GM12878 (cell line): ENCODE measurements at regions of chr1 and their contacts with region 1.

Region 1: DNA sequence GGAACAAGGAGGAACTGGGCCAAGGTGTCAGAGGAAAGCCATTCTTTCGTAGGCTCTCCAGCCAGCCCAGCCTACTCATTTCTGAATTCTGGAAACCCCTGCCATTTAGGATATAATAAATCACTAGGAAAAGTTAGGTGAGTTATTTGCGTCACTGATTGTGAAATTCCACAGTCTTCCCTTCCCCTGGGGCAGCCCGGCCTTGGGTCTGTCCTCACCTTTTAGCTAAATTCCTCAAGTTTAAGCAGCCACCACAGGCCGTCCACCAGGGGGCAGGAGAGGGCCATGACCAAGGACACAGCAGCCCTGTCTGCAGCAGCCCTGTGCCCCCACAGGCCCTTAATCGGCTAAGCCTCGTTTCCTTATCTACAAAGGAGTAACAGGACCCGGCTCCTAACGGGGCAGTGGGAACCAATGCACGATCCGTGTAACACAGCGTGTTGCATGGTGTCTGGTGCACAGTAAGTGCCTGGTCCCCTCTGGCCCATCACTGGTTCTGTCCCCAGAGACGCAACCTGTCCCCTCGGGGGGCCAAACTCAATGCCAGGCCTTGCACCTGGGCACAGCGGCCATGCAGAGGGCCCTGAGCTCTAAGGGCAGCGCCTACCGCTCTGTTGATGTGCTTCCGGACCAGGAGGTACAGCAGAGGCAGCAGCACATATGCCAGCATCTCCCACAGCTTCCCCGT is 18.1 kb downstream of the GPR157 start:
- DNase-seq: no peak
- ATAC-seq: peak; percentile 94
- H3K4me3 ChIP-seq: no peak overlapping the region
- H3K27ac ChIP-seq: no peak overlapping the region
- H3K4me1 ChIP-seq: peaks cover 19% of the 10 kb centered on the region
- H3K27me3 ChIP-seq: no peaks in the 10 kb centered on the region
- CTCF ChIP-seq: peak; percentile 87 to 93 (median 91)
- EP300 ChIP-seq: no peak
- POLR2A ChIP-seq: no peak
- RAD21 ChIP-seq: peak; percentile 98

Region 2: GRCh38 chr1:9087411-9088125 is 23.2 kb before region 1 on chr1:
- CTCF ChIA-PET with region 1: no interaction called
- POLR2A ChIA-PET with region 1: no interaction called
- RAD21 ChIA-PET with region 1: no interaction called
- SMC1A ChIA-PET with region 1: no interaction called
- in situ Hi-C with region 1: no loop called
- intact Hi-C with region 1: no loop called
- DNase-seq: no peak
- ATAC-seq: no peak
- H3K4me3 ChIP-seq: no peak overlapping the region
- H3K27ac ChIP-seq: no peak overlapping the region
- H3K4me1 ChIP-seq: no peaks in the 10 kb centered on the region
- H3K27me3 ChIP-seq: no peaks in the 10 kb centered on the region; a peak in 2 of 4 replicates
- CTCF ChIP-seq: no peak
- EP300 ChIP-seq: no peak
- POLR2A ChIP-seq: no peak
- RAD21 ChIP-seq: no peak

Region 3: DNA sequence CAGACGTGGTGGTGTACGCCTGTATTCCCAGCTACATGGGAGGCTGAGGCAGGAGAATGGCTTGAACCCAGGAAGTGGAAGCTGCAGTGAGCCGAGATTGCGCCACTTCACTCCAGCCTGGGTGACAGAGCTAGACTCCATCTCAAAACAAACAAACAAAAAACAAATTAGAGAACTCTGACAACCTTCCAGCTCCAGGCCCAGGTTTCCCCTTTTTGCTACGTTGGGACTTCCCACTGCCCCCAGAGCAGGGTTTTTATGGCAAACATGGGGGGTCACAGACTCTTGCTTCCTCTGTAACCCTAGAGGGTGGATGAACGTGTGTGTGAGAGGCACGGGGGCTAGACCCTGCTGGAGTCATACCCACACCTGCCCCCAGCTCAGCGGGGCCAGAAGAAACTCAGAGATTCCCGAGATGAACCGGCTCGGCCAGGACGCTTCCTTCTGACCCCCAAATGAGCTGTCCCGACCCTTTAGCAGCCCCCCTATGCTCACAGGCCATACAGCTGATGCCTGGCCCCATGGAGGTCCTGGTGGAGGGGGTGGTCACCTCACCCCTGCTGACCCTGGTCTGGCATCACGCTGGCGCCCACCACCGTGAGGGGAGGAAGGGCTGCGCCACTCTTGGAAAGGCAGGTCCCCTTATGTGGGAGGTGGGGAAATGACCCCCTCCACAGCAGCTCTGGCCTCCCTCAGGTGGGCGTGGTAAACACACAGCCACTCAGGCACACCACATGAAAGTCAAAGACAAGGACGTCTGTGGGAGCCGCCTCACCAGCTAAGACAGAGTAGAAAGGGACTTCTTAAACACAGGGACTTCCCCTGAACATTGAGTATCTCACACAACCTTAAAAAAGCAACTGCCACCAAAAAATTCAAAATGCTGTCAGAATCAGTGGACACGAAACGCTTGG is 10.9 kb after region 1 on chr1:
- CTCF ChIA-PET with region 1: interaction called, 36 read pairs
- POLR2A ChIA-PET with region 1: no interaction called
- RAD21 ChIA-PET with region 1: interaction called, 8 read pairs
- SMC1A ChIA-PET with region 1: interaction called, 20 read pairs
- in situ Hi-C with region 1: no loop called
- intact Hi-C with region 1: no loop called
- DNase-seq: peak; percentile 71
- ATAC-seq: peak; percentile 89
- H3K4me3 ChIP-seq: peak overlapping the region; percentile 53; the same call in 1 of the 2 replicates
- H3K27ac ChIP-seq: peak overlapping the region; percentile 74
- H3K4me1 ChIP-seq: peaks cover 40% of the 10 kb centered on the region
- H3K27me3 ChIP-seq: no peaks in the 10 kb centered on the region
- CTCF ChIP-seq: no peak
- EP300 ChIP-seq: peak; percentile 33 to 41; a peak in 1 of 4 replicates
- POLR2A ChIP-seq: no peak
- RAD21 ChIP-seq: no peak

Region 4: GRCh38 chr1:9145021-9145668 is 34.3 kb after region 1 on chr1:
- CTCF ChIA-PET with region 1: interaction called, 46 read pairs
- POLR2A ChIA-PET with region 1: no interaction called
- RAD21 ChIA-PET with region 1: interaction called, 12 read pairs
- SMC1A ChIA-PET with region 1: interaction called, 7 read pairs
- in situ Hi-C with region 1: no loop called
- intact Hi-C with region 1: no loop called
- DNase-seq: no peak
- ATAC-seq: peak; percentile 62
- H3K4me3 ChIP-seq: no peak overlapping the region
- H3K27ac ChIP-seq: no peak overlapping the region; the same call in 1 of the 2 replicates
- H3K4me1 ChIP-seq: peaks cover 17% of the 10 kb centered on the region
- H3K27me3 ChIP-seq: no peaks in the 10 kb centered on the region
- CTCF ChIP-seq: no peak
- EP300 ChIP-seq: no peak
- POLR2A ChIP-seq: no peak
- RAD21 ChIP-seq: no peak

Region 5: DNA sequence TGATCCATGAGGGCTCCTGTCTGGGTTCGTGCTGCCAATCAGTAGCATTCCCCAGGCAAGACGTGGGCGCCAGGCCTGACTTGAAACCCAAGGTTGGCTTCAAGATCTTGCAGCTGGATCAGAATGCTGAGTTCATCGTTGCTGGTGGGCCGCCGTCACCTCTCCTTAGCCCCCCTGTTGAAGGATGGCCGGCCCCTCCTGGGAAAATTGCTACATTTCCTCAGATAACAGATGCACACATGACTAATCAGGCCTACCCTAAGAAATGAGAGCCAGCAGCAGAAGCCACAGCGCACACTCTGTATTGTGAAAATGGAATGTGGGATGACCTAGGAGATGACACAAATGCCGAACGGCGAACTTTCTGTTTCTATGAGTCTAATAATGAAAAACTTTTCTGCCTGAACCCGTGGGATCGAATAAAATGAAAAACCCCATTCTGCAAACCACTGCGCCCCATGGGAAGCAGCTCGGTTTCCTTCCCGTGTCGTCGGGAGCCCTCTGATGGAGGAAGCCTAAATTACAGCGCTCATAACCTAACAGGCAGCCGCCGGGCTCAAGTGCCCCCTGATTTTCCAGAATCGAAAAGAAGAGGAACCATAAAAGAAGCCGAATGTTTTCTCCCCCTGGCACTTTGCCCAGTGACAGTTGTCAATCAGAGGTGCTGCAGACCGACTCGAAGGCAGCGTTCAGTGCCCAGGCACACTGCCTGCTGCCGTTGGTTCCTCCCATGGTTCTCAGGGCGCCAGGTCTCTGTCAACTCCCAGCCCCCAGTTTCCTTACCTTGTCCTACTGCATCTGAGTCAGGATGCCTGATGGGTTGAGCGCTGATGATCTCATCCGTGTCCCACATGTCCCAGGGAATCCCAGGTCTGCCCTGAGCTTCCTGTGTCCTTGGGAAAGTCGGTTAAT is 85.6 kb after region 1 on chr1:
- CTCF ChIA-PET with region 1: interaction called, 117 read pairs
- POLR2A ChIA-PET with region 1: interaction called, 6 read pairs
- RAD21 ChIA-PET with region 1: interaction called, 59 read pairs
- SMC1A ChIA-PET with region 1: interaction called, 43 read pairs
- in situ Hi-C with region 1: loop called (anchors 5 kb)
- intact Hi-C with region 1: loop called (anchors 1 kb)
- DNase-seq: peak; percentile 67
- ATAC-seq: peak; percentile 74
- H3K4me3 ChIP-seq: peak overlapping the region; percentile 5; the same call in 1 of the 2 replicates
- H3K27ac ChIP-seq: peak overlapping the region; percentile 51
- H3K4me1 ChIP-seq: peaks cover 52% of the 10 kb centered on the region
- H3K27me3 ChIP-seq: peaks cover 0 to 21% of the 10 kb centered on the region in 2 experiments; a peak in 3 of 4 replicates
- CTCF ChIP-seq: peak; percentile 81 to 97 (median 86); a peak in 5 of 6 replicates
- EP300 ChIP-seq: peak in 1 of 2 experiments; percentile 61; a peak in 1 of 4 replicates
- POLR2A ChIP-seq: no peak
- RAD21 ChIP-seq: peak; percentile 96

Region 6: DNA sequence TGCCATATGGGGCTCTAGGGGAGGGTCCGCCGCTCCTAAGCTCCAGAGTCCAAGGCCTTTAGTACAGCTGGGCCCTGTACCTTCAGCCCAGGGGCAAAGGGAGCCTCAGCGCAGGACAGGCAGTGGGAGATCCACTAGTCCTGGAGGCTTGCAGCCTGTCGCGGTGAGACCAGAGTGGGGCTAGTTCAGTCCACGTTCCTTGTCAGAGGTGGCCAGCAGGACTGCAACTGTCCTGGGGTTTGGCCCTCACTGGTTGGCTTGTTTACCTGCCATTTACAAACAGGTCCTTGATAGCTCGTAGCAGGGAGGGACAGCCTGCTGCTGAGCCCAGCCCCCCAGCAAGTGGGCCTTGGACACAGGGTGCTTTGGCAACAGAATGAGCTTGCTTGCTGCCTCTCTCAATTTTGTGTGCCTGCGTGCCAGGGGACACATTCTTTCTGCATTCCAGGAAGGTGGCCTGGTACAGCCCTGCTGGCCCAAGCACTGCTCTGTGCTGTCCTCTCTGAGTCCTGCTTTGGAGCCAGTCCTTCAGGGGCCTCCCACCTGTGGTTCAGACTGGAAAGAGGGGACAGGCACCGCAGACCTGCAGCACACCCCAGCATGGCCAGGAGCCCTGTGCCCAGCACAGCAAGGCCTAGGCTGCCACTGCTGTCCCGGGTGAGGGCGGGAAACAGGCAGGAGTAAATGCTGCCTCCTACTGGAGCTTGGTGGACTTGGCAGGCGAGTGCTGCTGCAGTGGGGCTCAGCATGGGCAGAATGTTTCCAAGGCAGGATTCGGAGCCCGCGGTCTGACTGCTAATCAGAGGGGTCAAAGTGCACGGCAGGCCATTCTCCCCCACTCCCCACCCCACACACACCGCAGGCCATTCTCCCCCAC is 139.0 kb after region 1 on chr1:
- CTCF ChIA-PET with region 1: interaction called, 12 read pairs
- POLR2A ChIA-PET with region 1: interaction called, 3 read pairs
- RAD21 ChIA-PET with region 1: interaction called, 3 read pairs
- SMC1A ChIA-PET with region 1: interaction called, 4 read pairs
- in situ Hi-C with region 1: no loop called
- intact Hi-C with region 1: loop called (anchors 5 kb)
- DNase-seq: no peak
- ATAC-seq: peak; percentile 93
- H3K4me3 ChIP-seq: no peak overlapping the region
- H3K27ac ChIP-seq: no peak overlapping the region
- H3K4me1 ChIP-seq: no peaks in the 10 kb centered on the region
- H3K27me3 ChIP-seq: no peaks in the 10 kb centered on the region
- CTCF ChIP-seq: peak; percentile 49 to 60 (median 57)
- EP300 ChIP-seq: no peak
- POLR2A ChIP-seq: no peak
- RAD21 ChIP-seq: peak; percentile 65

Region 7: GRCh38 chr1:9338397-9339246 is 227.8 kb after region 1 on chr1:
- CTCF ChIA-PET with region 1: no interaction called
- POLR2A ChIA-PET with region 1: no interaction called
- RAD21 ChIA-PET with region 1: no interaction called
- SMC1A ChIA-PET with region 1: no interaction called
- in situ Hi-C with region 1: no loop called
- intact Hi-C with region 1: no loop called
- DNase-seq: no peak
- ATAC-seq: no peak
- H3K4me3 ChIP-seq: no peak overlapping the region
- H3K27ac ChIP-seq: no peak overlapping the region
- H3K4me1 ChIP-seq: no peaks in the 10 kb centered on the region
- H3K27me3 ChIP-seq: no peaks in the 10 kb centered on the region; a peak in 1 of 4 replicates
- CTCF ChIP-seq: no peak
- EP300 ChIP-seq: no peak
- POLR2A ChIP-seq: no peak
- RAD21 ChIP-seq: no peak

Region 8: DNA sequence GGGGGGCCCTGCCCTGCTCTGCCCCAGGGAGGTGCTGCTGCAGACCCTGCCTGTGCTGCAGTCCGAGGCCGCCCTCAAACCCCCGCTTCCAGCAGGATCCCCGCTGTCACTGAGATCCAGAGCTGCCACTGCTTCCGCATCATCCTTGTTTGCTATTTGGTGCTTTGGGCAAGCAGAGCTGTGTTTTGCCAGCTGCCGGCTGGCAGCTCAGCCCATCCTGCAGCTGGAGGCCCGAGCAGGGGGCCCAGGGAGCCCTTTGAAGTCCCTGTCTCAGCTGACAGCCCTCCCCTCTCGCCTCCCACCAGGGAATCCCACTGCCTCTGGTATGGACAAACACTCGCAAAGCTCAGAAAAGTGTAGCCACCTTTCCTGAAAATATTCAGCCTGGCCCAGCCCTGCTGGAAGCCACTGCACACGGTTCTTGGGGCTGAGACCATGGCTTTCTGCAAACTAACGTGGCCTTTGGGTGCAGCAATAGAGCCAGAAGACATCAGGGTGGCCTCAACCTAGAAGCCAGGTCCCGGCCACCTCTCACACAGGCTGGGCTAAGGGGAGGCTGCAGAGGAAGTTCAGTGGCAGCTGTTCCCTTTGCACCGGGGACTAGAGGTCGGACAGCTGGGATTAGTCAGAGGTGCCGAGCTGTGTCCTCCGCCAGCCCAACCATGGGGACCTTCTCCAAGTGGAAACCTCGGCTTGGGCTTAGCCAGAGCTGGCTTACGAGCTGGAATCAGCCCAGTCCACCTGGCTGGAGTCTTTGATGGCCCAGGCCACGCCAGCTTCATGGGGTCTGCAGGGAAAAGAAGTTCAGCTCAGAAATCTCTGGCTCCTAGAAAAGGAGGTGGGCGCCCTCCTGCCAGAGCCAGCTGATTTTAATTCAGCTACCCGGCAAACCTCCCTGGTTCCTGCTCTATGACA is 289.0 kb after region 1 on chr1:
- CTCF ChIA-PET with region 1: no interaction called
- POLR2A ChIA-PET with region 1: no interaction called
- RAD21 ChIA-PET with region 1: no interaction called
- SMC1A ChIA-PET with region 1: no interaction called
- in situ Hi-C with region 1: no loop called
- intact Hi-C with region 1: no loop called
- DNase-seq: no peak
- ATAC-seq: no peak
- H3K4me3 ChIP-seq: no peak overlapping the region
- H3K27ac ChIP-seq: no peak overlapping the region
- H3K4me1 ChIP-seq: no peaks in the 10 kb centered on the region
- H3K27me3 ChIP-seq: no peaks in the 10 kb centered on the region; a peak in 2 of 4 replicates
- CTCF ChIP-seq: no peak
- EP300 ChIP-seq: no peak
- POLR2A ChIP-seq: no peak
- RAD21 ChIP-seq: no peak